GM10248 (cell line): ENCODE measurements at regions of chr11 and their contacts with region 1.

Region 1: GRCh38 chr11:61899146-61899841 is 7.9 kb upstream of the FADS3 start:
- DNase-seq: peak; percentile 95
- CTCF ChIP-seq: peak; percentile 100

Region 2: GRCh38 chr11:61733120-61733978 is 165.9 kb before region 1 on chr11:
- CTCF ChIA-PET with region 1: no interaction called
- POLR2A ChIA-PET with region 1: no interaction called
- DNase-seq: peak; percentile 95
- CTCF ChIP-seq: peak; percentile 99

Region 3: GRCh38 chr11:61816736-61817455 is 82.4 kb before region 1 on chr11 and contains the start of gene FADS1:
- CTCF ChIA-PET with region 1: interaction called, 27 read pairs
- POLR2A ChIA-PET with region 1: no interaction called
- DNase-seq: peak; percentile 85
- CTCF ChIP-seq: peak; percentile 64

Region 4: DNA sequence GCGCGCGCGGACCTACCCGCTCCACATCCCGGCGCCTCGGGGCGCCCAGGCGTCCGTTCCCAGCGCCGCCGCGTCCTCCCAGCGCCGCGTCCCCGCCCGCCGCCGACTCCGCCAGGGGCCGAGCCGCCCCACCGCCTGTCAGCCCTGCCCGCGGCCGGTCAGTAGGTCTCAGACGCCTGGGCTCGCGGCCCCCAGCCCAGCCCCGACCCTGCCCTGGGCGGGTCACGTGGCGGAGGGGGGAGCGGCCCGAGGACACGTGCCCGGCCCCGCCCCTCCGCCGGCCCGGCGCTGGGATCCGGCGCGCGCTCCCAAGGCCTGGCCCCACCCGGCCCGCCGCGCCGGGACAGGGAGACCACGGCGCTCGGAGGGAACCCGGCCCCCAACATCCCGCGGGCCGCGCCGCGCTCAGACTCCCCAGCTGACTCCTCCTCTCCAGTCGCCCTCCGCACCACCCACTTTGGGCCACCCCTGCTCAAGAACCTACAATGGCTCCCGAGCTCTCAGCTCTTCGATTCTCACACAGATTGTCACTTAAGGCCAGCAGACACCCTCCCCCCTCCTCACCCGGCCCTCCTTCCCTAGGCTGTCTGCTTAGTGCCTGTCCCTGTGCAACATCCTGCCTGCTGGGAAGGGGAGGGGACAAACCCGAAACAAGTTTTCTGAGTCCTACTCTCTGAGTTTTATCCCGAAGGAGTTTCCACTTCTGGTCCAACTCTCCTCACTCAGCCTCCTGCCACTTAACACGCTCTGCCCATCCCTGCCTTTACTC is 18.2 kb after region 1 on chr11 and contains the start of gene RAB3IL1:
- CTCF ChIA-PET with region 1: interaction called, 80 read pairs
- POLR2A ChIA-PET with region 1: no interaction called
- DNase-seq: no peak
- CTCF ChIP-seq: no peak

Region 5: GRCh38 chr11:61935861-61936260 is 36.6 kb after region 1 on chr11:
- CTCF ChIA-PET with region 1: interaction called, 15 read pairs
- POLR2A ChIA-PET with region 1: no interaction called
- DNase-seq: no peak
- CTCF ChIP-seq: no peak

Region 6: DNA sequence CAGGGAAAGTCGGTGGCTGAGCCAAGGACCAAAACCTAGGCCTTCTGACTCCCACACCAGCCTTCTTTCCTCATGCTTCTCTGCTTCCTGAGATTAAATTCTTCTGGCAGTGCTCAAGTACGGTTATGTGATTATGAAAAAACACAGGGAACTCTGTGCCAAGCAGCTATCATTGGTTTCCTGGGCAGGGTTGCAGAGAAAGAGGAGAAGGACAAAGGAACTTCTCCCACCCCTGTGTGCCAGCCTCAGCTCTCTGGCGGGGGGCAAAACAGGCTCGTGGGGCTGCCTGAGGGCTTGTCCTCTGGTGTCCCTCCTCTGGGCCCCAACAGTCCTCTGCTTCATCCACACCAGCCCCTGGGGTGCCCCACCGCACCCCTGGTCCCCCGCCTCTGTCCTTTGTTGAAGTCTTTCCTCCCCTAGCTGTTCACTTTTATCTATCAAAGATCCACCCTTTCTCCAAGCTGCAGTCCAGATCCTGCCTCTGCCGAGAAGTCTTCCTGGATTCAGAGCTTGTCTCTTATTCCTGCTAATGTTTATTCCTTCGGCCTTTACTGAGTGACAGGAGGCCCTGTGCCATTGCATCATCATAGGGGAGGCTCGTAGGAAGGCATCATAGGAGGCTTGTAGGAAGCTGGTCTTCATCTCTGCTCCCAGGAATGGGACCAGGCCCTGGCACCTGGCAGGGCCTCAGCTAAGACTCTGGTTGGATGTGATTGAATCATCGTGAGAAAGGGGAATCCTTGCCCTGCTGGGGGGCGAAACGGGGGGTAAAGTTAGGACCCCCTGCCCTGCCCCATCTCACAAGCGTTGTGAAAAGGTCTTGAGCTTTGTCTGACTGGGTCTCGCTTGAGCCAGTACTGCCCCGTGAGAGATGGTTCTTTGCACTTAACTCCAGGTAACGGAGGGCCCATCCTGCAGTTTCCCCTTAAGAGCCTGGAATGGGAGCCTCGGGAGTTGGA is 79.7 kb after region 1 on chr11:
- CTCF ChIA-PET with region 1: interaction called, 15 read pairs
- POLR2A ChIA-PET with region 1: no interaction called
- DNase-seq: no peak
- CTCF ChIP-seq: no peak

Region 7: DNA sequence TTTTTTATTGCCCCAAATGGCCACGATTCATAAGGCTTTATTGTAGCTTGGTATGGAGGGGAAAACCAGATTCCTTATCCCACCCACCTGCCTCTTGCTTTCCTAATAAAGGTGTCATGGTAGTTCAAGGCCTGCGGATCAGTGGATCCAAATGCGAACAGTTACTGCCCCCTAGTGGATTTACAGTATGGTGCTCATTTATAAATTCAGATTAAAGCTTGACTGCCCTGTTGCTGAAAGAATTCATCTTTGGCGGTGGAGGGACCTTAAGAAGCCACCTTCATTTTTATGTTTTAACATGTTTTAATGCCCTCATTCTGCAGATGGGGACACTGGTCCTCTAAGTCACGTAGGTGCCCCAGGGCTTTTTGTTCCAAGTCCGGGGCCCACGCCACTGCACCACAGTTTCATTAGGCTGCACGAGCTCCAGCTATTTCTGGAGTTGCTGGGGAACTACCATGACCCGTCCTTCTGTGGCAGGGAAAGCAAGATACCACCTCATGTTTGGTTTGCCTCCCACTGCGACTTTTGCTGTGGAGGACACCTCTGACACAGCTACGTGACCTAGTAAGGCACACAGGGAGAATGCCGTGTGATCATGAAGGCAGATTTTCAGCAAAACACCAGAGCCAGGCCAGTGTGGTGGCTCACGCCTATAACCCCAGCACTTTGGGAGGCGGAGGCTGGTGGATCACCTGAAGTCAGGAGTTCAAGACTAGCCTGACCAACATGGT is 208.9 kb after region 1 on chr11:
- CTCF ChIA-PET with region 1: interaction called, 204 read pairs
- POLR2A ChIA-PET with region 1: no interaction called
- DNase-seq: peak; percentile 56
- CTCF ChIP-seq: peak; percentile 76